ENCODE measurements at regions of chr10 and their contacts with region 1.

Region 1: DNA sequence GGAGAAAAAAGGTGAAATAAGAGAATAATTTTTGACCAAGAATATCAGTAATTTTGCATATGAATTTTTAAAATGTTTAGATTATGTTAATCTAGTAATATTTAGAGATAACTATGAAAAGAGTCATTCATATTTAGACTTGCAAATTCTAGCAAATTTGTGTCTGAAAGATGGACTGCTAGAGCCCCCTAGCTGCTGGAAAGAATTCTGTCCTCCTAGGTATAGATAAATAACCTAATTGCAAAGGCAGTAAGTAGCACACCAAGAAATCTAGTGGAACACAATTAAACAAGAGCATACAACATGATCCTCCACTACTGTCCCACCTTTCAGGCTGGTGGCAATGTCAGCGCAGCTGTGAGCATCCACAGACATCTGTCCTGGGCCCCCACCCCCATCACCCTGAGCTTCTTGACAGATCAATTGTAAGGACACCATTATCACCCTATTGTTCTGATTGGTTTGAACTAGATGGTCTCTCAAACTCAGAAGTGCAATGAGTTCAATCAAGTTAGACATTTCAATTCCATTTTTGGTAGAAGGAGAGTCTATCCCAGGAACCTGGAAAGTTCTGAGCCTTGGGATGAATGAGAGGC is 15.0 kb upstream of the GFRA1 start:
- DNase-seq: peak; percentile 64
- ATAC-seq: peak; percentile 78; the same call in 1 of the 2 replicates
- H3K4me3 ChIP-seq: no peak overlapping the region
- H3K27ac ChIP-seq: no peak overlapping the region
- H3K4me1 ChIP-seq: no peaks in the 10 kb centered on the region
- H3K27me3 ChIP-seq: peaks cover 2% of the 10 kb centered on the region; the same call in 1 of the 2 replicates
- CTCF ChIP-seq: peak; percentile 94
- POLR2A ChIP-seq: no peak
- RAD21 ChIP-seq: peak; percentile 92

Region 2: DNA sequence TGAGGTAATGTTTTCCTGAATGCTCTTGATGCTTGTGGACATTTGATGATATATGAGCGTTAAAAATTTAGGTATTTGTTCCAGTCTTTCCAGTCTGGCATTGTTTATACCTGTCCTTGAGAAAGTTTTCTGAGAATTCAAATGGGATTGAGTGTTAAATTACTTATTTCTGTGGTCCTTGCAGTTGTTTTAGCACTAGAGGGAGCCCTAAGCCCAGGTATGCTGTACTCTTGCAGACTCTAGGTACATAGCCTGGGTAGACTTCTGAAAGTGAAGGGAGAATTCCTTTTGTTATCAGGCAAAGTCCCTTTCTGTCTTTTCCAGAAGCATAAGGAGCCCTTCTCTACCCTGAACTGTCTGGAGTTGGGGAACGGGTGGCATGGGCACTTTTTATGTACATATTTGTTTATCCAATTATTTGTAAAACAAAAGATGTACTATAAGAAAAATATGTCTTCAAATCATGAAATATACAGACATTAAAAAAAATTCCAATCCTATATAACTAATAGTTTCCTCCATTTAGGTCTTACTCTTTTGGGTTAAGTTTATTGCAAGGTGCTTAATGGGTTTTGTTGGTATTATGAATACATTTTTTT is 932.7 kb before region 1 on chr10:
- CTCF ChIA-PET with region 1: no interaction called
- POLR2A ChIA-PET with region 1: no interaction called
- dilution Hi-C with region 1: no loop called
- in situ Hi-C with region 1: no loop called
- intact Hi-C with region 1: loop called (anchors 10 kb)
- DNase-seq: peak; percentile 63
- ATAC-seq: peak; percentile 66
- H3K4me3 ChIP-seq: no peak overlapping the region
- H3K27ac ChIP-seq: no peak overlapping the region
- H3K4me1 ChIP-seq: no peaks in the 10 kb centered on the region
- H3K27me3 ChIP-seq: no peaks in the 10 kb centered on the region
- CTCF ChIP-seq: peak; percentile 79
- POLR2A ChIP-seq: no peak
- RAD21 ChIP-seq: peak; percentile 82

Region 3: DNA sequence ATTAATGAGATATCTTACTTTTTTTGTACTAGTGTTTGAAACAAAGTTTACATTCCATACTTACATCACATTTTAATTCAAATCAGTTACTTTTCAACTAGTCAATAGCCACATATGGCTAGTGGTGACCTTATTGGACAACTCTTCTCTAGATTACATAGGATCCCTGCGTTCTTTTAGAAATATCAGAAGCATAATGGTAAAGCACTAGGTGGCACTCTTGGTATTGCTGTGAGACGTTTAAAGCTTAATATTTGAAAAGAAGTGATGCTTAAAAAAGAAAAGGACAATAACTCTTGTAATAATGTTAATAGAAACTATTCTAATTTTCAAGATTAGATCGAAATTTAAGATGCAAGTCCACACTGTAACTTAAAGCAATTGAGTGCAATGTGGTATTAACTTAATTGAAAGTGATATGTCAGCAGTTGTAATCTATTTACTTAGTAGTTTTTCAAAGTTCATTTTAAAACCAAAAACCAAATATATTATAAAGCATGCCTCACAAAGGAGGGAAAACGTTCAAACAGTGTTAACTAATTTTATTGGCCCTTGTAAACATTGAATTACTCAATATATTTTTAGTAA is 855.7 kb before region 1 on chr10:
- CTCF ChIA-PET with region 1: interaction called, 5 read pairs
- POLR2A ChIA-PET with region 1: no interaction called
- dilution Hi-C with region 1: no loop called
- in situ Hi-C with region 1: no loop called
- intact Hi-C with region 1: loop called (anchors 1 kb)
- DNase-seq: peak; percentile 6
- ATAC-seq: peak; percentile 53
- H3K4me3 ChIP-seq: no peak overlapping the region
- H3K27ac ChIP-seq: no peak overlapping the region
- H3K4me1 ChIP-seq: no peaks in the 10 kb centered on the region
- H3K27me3 ChIP-seq: no peaks in the 10 kb centered on the region
- CTCF ChIP-seq: peak; percentile 47
- POLR2A ChIP-seq: no peak
- RAD21 ChIP-seq: peak; percentile 58

Region 4: DNA sequence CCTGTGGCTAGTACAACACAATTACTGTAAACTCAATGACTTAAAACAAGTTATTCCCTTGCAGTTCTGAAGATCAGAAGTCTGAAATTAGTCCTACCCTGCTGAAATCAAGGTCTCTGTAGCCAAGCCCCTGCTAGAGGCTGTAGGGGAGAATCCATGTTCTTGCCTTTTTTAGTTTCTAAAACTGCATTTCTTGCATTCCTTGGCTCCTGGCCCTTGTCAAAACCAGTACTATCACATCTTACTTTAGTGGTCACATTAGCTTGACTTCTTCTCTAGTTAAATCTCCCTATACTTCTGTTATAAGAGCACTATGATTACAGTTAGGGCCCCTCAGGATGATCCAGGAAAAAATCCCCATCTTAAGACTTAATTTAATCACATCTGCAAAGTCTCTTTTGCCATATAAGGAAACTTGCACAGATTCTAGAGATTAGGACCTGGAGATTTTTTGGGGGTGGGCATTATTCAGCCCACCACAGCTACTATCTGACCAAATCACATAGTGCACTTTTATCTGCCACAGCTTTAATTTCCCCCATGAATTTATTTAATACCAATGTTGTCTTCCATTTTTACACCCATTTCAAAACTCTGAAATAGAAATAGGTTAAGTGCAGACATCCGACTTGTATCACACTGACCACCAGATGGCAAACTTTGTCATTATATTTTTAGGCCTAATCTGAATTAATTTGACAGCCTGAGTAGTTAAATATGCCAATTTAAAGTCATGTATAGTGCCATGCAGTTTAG is 581.8 kb before region 1 on chr10:
- CTCF ChIA-PET with region 1: interaction called, 17 read pairs
- POLR2A ChIA-PET with region 1: no interaction called
- dilution Hi-C with region 1: no loop called
- in situ Hi-C with region 1: loop called (anchors 5 kb)
- intact Hi-C with region 1: loop called (anchors 1 kb)
- DNase-seq: peak; percentile 30
- ATAC-seq: peak; percentile 77
- H3K4me3 ChIP-seq: no peak overlapping the region
- H3K27ac ChIP-seq: no peak overlapping the region
- H3K4me1 ChIP-seq: no peaks in the 10 kb centered on the region
- H3K27me3 ChIP-seq: no peaks in the 10 kb centered on the region
- CTCF ChIP-seq: peak; percentile 64
- POLR2A ChIP-seq: no peak
- RAD21 ChIP-seq: peak; percentile 54

Region 5: GRCh38 chr10:115795964-115796363 is 492.0 kb before region 1 on chr10:
- CTCF ChIA-PET with region 1: interaction called, 19 read pairs
- POLR2A ChIA-PET with region 1: no interaction called
- dilution Hi-C with region 1: no loop called
- in situ Hi-C with region 1: loop called (anchors 5 kb)
- intact Hi-C with region 1: loop called (anchors 1 kb)
- DNase-seq: no peak
- ATAC-seq: no peak
- H3K4me3 ChIP-seq: no peak overlapping the region
- H3K27ac ChIP-seq: no peak overlapping the region
- H3K4me1 ChIP-seq: no peaks in the 10 kb centered on the region
- H3K27me3 ChIP-seq: no peaks in the 10 kb centered on the region
- CTCF ChIP-seq: no peak
- POLR2A ChIP-seq: no peak
- RAD21 ChIP-seq: no peak

Region 6: DNA sequence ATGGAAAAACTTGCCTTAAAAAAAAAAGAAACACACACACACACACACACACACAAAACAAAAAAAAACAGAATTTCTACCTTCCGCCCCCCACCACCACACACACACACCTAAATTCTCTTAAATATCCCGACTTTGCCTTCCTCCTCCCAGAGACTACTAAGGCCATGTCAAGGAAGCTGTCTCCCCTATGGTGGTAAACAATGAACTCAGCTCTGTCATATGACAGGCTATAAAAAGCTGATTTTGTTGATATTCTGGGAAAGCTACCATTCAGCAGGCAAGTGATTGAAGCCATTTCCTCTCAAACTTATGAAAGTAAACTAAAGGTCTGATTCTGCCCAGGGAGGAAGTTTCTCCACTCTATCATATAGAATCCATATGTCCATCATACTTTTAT is 486.0 kb before region 1 on chr10:
- CTCF ChIA-PET with region 1: interaction called, 19 read pairs
- POLR2A ChIA-PET with region 1: no interaction called
- dilution Hi-C with region 1: no loop called
- in situ Hi-C with region 1: loop called (anchors 5 kb)
- intact Hi-C with region 1: loop called (anchors 1 kb)
- DNase-seq: peak; percentile 3
- ATAC-seq: no peak
- H3K4me3 ChIP-seq: no peak overlapping the region
- H3K27ac ChIP-seq: no peak overlapping the region
- H3K4me1 ChIP-seq: no peaks in the 10 kb centered on the region
- H3K27me3 ChIP-seq: no peaks in the 10 kb centered on the region
- CTCF ChIP-seq: no peak
- POLR2A ChIP-seq: no peak
- RAD21 ChIP-seq: no peak

Region 7: GRCh38 chr10:116490028-116490662 is 202.1 kb after region 1 on chr10:
- CTCF ChIA-PET with region 1: no interaction called
- POLR2A ChIA-PET with region 1: no interaction called
- dilution Hi-C with region 1: no loop called
- in situ Hi-C with region 1: no loop called
- intact Hi-C with region 1: no loop called
- DNase-seq: peak; percentile 16
- ATAC-seq: peak; percentile 53; the same call in 1 of the 2 replicates
- H3K4me3 ChIP-seq: no peak overlapping the region
- H3K27ac ChIP-seq: no peak overlapping the region
- H3K4me1 ChIP-seq: no peaks in the 10 kb centered on the region
- H3K27me3 ChIP-seq: no peaks in the 10 kb centered on the region
- CTCF ChIP-seq: peak; percentile 59
- POLR2A ChIP-seq: no peak
- RAD21 ChIP-seq: peak; percentile 24; the same call in 1 of the 2 replicates

Measured in IMR-90 (cell line).